ENCODE measurements at regions of chr7 and their contacts with region 1.

Region 1: DNA sequence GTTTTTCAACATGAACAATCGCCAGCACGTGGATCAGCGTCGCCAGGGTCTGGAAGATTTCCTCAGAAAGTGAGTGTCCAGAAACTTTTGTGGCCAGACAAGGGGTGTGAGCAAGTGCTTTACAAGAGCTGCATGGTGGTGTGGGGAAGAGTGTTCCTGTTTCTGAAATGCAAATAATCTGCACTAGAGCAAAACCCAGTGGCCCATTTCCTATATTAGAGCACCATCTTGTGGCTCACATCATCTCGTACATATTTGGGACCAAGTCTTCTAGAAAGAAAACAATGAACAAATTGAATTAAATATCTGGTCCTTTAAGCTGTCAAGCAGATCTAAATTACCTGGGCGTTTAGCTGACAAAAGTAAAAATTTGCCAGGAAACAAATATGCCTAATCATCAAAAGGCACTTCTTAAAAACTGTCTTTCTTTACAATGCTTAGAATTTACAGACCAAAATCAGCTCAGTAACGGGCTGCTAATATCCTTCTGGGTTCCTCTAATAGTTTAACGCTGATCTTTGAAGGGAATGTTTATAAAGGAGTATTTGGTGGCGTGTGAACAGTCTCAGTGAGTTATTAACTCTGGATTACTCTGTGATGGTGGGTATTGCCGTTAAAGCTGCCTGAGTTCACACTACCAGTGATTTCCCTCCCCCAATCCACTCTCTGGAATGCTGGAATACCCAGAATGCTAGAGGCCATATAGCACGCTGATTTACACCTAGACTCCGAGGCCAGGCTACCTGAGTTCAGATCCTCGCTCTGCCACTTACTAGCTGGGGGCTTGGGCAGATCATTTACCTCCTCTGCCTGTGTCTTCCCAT is 73.6 kb downstream of the SNX10 start:
- DNase-seq: peak; percentile 54
- CTCF ChIP-seq: peak; percentile 74

Region 2: GRCh38 chr7:25726781-25727311 is 638.4 kb before region 1 on chr7:
- CTCF ChIA-PET with region 1: no interaction called
- POLR2A ChIA-PET with region 1: no interaction called
- DNase-seq: no peak
- CTCF ChIP-seq: no peak

Region 3: GRCh38 chr7:25820432-25821040 is 544.8 kb before region 1 on chr7:
- CTCF ChIA-PET with region 1: no interaction called
- POLR2A ChIA-PET with region 1: no interaction called
- DNase-seq: peak; percentile 16
- CTCF ChIP-seq: peak; percentile 14

Region 4: DNA sequence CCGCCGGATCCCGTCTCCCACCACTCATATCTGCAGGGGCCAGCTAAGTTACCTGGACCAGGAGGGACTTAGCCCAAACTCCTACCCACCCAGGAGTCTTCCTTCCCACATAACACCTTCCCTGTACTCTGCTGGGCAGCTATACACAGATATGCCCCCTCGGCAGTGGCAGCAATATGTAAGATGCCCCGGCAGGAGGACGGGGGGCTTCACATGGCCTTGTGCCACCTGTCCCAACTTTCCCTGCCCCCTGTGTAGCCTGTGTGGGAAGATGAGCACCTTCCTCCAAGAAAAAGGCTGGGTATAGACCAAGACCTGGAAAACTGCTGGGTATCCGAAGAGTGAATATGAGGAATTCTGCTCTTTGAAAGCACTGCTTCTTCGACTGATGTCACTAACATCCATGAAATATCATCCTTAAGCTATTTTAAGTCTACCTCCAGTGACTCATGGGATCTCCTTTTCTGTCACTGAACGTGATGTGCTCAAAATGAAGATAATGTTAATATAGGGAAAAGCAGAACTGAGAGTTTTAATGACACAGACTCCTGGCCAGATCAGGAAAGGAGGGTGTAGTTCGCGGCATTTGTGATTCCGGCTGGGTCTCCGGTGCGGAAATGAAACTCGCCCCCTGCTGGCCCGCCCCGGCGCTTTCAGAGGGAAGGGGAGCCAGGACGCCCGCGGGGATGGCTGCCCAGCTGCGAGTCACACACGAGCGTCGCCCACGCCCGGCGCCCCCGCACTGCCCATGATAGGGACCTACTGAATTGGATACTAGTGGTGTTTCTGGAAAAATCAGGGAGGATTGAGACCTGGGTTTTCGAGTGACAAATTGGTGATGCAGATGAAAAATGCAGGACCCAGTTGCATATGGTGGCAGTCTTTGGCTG is 470.1 kb before region 1 on chr7:
- CTCF ChIA-PET with region 1: interaction called, 175 read pairs
- POLR2A ChIA-PET with region 1: no interaction called
- DNase-seq: peak; percentile 81
- CTCF ChIP-seq: peak; percentile 57

Region 5: DNA sequence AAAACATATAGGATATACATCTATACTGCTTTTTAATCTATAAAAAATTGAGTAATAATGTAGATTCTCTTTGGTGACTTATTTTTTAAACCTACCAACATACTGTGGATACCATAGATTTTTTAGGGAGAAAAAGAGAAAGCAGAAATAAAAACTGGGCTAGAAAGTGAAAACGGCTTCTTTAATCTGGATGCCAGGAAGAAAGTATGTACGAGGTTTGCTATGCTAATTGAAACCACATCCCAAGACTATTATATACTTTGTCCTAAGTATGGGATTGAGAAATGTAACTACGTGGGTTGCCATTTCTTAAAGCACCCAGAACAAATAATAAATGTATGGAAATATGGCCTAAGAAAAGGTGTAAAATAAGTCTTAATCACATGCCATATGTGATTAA is 342.3 kb before region 1 on chr7:
- CTCF ChIA-PET with region 1: no interaction called
- POLR2A ChIA-PET with region 1: no interaction called
- DNase-seq: no peak
- CTCF ChIP-seq: no peak

Region 6: DNA sequence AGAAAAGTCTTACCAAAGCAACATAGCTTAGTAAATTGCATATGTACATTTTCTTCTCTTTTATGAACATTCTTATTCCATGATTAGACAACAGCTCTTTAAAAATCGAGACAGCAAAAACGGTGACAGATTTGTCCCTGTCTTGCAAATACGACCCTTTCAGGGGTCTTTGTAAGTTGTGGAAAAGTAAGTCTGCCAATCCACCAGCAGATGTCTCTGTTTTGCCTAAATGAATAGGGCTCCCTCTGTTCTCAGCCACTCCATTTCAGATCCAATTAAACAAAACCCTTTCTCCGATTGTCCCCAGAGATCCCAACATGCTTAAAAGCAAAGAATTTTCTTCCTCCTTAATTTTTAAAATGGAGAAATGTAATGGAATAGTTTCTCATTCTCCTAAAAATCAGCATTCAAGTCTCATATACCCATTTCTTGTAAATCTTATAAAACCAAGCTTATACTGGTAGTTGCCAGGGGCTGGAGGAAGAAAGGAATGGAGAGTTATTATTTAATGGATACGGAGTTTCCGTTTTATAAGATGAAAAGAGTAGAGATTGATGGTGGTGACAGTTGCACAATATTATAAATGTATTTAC is 274.3 kb before region 1 on chr7:
- CTCF ChIA-PET with region 1: interaction called, 101 read pairs
- POLR2A ChIA-PET with region 1: no interaction called
- DNase-seq: peak; percentile 54
- CTCF ChIP-seq: peak; percentile 47

Region 7: DNA sequence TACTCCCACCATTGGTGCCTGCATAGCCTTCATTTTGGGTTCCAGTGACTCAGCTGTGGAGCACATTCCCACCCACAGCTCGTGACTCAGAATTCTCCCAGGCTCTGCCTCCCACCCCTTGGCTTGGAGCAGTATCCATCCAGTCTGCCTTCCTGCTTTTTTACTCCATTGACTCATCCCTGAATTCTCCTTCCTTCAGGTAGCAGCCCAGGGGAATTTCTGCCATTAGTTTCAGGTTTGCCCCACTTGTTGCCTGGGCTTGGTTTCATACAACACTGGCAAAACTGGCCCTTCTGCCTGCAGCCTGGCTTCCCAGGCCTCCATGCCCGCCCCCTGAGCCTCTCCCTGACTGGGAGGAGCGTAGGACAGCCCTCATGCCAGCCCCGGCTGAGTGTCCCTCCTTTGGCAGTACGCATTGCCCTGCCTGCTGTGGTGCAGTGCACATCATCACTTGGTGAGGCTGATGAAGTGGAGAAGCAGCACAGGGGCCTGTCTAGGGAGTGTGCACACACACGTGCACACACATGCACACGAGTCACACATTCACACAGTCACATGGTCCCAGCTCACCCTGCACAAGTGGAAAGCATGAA is 18.6 kb before region 1 on chr7:
- CTCF ChIA-PET with region 1: interaction called, 68 read pairs
- POLR2A ChIA-PET with region 1: no interaction called
- DNase-seq: no peak
- CTCF ChIP-seq: no peak

Region 8: GRCh38 chr7:26398756-26399501 is 33.6 kb after region 1 on chr7:
- CTCF ChIA-PET with region 1: interaction called, 22 read pairs
- POLR2A ChIA-PET with region 1: no interaction called
- DNase-seq: peak; percentile 87
- CTCF ChIP-seq: no peak

Region 9: GRCh38 chr7:26686448-26686981 is 321.2 kb after region 1 on chr7:
- CTCF ChIA-PET with region 1: interaction called, 17 read pairs
- POLR2A ChIA-PET with region 1: no interaction called
- DNase-seq: no peak
- CTCF ChIP-seq: peak; percentile 58

Measured in GM10248 (cell line).